B cell (primary cell): ENCODE measurements at regions of chr1 and their contacts with region 1.

Region 1: GRCh38 chr1:12208764-12209494 is 20.9 kb upstream of the VPS13D start:
- DNase-seq: peak; percentile 88
- ATAC-seq: peak; percentile 60
- H3K4me3 ChIP-seq: no peak overlapping the region
- H3K4me3 Mint-ChIP-seq: peak overlapping the region; percentile 69
- H3K27ac ChIP-seq: peak overlapping the region; percentile 28 to 72
- H3K27ac Mint-ChIP-seq: peak overlapping the region; percentile 92
- H3K4me1 ChIP-seq: peaks cover 31 to 61% of the 10 kb centered on the region in 2 donors
- H3K4me1 Mint-ChIP-seq: peaks cover 62% of the 10 kb centered on the region
- H3K27me3 ChIP-seq: no peaks in the 10 kb centered on the region
- H3K27me3 Mint-ChIP-seq: no peaks in the 10 kb centered on the region
- CTCF ChIP-seq: peak; percentile 91

Region 2: DNA sequence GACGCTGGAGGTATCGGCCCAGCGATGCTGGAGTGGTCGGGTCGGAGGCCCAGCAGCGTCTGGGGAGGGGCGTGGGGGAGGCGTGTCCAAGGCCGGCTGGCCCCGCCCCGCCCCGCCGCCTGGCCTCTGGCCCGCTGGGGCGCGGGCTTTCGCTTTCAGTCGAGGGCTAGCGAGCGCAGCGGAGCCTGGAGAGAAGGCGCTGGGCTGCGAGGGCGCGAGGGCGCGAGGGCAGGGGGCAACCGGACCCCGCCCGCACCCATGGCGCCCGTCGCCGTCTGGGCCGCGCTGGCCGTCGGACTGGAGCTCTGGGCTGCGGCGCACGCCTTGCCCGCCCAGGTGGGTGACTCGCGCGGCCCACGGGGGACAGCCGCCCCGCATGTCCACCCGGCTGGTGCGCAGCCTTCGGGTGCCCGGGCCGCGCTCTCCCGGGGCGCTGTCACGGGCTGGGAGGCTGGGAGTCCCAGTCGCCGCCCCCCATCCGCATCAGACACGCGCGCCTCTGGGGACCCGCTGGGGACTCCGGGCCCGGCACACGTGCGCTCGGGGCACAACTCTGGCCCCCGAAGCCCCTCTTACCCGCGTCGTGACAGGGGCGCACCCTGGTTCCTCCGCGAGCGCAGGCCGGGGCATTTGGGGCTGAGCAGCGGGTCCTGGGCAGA is 42.0 kb before region 1 on chr1 and contains the start of gene TNFRSF1B:
- CTCF ChIA-PET with region 1: interaction called, 6 read pairs
- POLR2A ChIA-PET with region 1: no interaction called
- intact Hi-C with region 1: loop called (anchors 2 kb)
- DNase-seq: peak; percentile 81
- ATAC-seq: peak; percentile 76
- H3K4me3 ChIP-seq: peak within 1 kb of the TSS; percentile 69 to 80 (median 79)
- H3K4me3 Mint-ChIP-seq: peak within 1 kb of the TSS; percentile 98
- H3K27ac ChIP-seq: peak within 1 kb of the TSS; percentile 55 to 71
- H3K27ac Mint-ChIP-seq: peak within 1 kb of the TSS; percentile 94
- H3K4me1 ChIP-seq: peaks cover 25 to 52% of the 10 kb centered on the region in 2 donors
- H3K4me1 Mint-ChIP-seq: peaks cover 61% of the 10 kb centered on the region
- H3K27me3 ChIP-seq: no peaks in the 10 kb centered on the region
- H3K27me3 Mint-ChIP-seq: no peaks in the 10 kb centered on the region
- CTCF ChIP-seq: no peak
- total RNA-seq, gene TNFRSF1B: 86.6 and 99.4 TPM in 2 replicates

Region 3: DNA sequence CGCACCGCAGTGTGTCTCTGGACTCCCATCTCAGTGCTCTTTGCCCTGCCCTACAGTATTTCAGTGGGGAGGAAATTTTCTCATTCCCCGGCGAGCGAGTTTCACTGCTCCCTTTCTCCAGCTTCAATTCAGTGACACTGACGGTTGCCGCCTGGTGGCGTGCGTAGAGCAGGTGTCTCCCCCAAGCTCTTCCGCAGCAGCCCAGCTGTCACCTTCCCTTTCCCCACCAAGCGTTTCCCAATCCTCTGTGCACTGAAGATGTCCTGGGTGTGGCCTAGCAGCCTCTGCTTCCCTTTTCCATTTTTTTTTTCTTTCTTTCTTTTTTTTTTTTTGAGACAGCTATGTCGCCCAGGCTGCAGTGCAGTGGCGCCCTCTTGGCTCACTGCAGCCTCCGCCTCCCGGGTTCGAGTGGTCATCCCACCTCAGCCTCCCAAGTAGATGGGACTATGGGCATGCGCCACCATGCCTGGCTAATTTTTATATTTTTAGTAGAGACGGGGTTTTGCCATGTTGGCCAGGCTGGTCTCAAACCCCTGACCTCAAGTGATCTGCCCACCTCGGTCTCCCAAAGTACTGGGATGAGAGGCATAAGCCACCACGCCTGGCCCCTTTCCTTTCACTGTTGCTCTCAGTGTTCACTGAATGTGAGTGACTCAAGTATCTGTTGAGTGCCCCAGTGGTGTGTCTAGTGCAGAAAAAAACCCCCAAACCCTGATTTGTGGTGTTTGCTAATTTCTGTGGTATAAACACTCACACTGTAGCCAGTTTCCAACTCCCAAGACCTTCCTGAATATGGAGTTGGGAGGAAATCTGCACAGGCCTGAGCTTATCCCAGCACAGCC is 12.1 kb before region 1 on chr1:
- CTCF ChIA-PET with region 1: interaction called, 54 read pairs
- POLR2A ChIA-PET with region 1: interaction called, 5 read pairs
- intact Hi-C with region 1: no loop called
- DNase-seq: peak; percentile 37
- ATAC-seq: peak; percentile 39
- H3K4me3 ChIP-seq: no peak overlapping the region
- H3K4me3 Mint-ChIP-seq: peak overlapping the region; percentile 21
- H3K27ac ChIP-seq: no peak overlapping the region
- H3K27ac Mint-ChIP-seq: peak overlapping the region; percentile 53
- H3K4me1 ChIP-seq: peaks cover 13 to 39% of the 10 kb centered on the region in 2 donors
- H3K4me1 Mint-ChIP-seq: peaks cover 51% of the 10 kb centered on the region
- H3K27me3 ChIP-seq: no peaks in the 10 kb centered on the region
- H3K27me3 Mint-ChIP-seq: no peaks in the 10 kb centered on the region
- CTCF ChIP-seq: peak; percentile 28

Region 4: DNA sequence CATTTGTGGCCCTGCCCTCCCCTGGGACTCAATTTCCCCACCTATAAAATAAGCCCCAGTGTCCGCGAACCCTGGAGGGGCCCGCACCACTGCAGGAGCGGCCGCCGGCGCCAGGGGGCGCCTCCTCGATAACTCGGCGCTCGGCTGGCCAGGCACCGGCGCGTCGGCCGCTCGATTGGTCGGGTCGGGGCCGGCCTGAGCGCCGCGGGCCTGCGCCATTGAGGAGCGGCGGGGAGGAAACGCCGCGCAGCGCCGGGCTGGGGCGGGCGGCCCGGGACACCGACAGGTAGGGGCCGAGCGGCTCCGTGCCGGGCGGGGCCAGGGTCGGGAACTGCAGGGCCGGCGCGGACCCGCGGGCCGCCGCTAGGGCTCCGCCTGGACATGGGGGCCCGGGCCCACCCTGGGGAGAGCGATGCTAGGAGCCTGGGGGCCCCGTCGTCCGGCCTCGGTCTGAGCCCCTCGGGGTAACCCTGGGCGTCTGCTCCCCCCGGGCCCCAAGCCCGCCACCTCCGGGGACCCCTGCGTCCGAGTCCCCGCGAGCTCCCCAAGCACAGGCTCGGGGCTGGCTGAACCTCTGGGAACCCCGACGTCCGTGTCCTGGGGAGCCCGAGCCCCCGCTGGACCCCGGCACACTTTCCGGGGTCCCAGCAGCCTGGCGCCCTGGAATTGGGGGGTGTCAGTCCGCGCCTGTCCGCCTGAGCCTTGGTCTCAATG is 21.1 kb after region 1 on chr1 and contains the start of gene VPS13D:
- CTCF ChIA-PET with region 1: interaction called, 29 read pairs
- POLR2A ChIA-PET with region 1: no interaction called
- intact Hi-C with region 1: loop called (anchors 1 kb)
- DNase-seq: peak; percentile 88
- ATAC-seq: peak; percentile 95
- H3K4me3 ChIP-seq: peak within 1 kb of the TSS; percentile 73 to 98 (median 87)
- H3K4me3 Mint-ChIP-seq: peak within 1 kb of the TSS; percentile 92
- H3K27ac ChIP-seq: peak within 1 kb of the TSS in 1 of 2 donors; percentile 85
- H3K27ac Mint-ChIP-seq: peak within 1 kb of the TSS; percentile 71
- H3K4me1 ChIP-seq: peaks cover 12 to 13% of the 10 kb centered on the region in 2 donors
- H3K4me1 Mint-ChIP-seq: peaks cover 21% of the 10 kb centered on the region
- H3K27me3 ChIP-seq: no peaks in the 10 kb centered on the region
- H3K27me3 Mint-ChIP-seq: peaks cover 3% of the 10 kb centered on the region
- CTCF ChIP-seq: peak; percentile 91
- total RNA-seq, gene VPS13D: 104 and 105 TPM in 2 replicates